ENCODE measurements at regions of chr19 and their contacts with region 1.

Region 1: DNA sequence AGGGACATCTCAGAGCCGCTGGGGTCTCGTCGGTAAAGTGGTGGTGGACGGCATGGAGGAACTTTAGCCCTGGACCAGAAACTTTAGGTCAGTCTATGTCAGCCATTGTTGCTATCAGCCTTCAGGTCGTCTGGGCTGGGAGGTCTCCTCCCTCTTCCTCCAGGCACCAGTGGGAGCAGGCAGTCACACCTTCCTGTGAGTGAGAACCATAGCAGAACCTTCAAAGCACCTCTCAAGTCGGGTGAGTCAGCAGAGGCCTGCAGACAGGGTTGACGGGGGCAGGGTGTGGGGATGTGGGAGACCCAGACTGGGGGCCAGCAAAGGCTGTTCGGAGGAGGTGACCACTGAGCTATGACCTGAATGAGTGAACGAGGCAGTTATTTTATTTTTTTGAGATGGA is 15.4 kb upstream of the SBNO2 start:
- DNase-seq: peak; percentile 87 to 88
- H3K4me3 ChIP-seq: no peak overlapping the region
- H3K27ac ChIP-seq: peak overlapping the region; percentile 14 to 75 (median 70)
- H3K4me1 ChIP-seq: peaks cover 3 to 18% of the 10 kb centered on the region in 2 donors
- H3K27me3 ChIP-seq: no peaks in the 10 kb centered on the region
- CTCF ChIP-seq: no peak
- POLR2A ChIP-seq: peak in 1 of 2 donors; percentile 39

Region 2: GRCh38 chr19:1113033-1113985 is 76.1 kb before region 1 on chr19:
- intact Hi-C with region 1: loop called (anchors 5 kb)
- DNase-seq: peak; percentile 97
- H3K4me3 ChIP-seq: no peak overlapping the region
- H3K27ac ChIP-seq: peak overlapping the region; percentile 69 to 76 (median 73)
- H3K4me1 ChIP-seq: peaks cover 4 to 14% of the 10 kb centered on the region in 2 donors
- H3K27me3 ChIP-seq: no peaks in the 10 kb centered on the region
- CTCF ChIP-seq: peak; percentile 71 to 98 (median 90)
- POLR2A ChIP-seq: peak in 1 of 2 donors; percentile 41

Region 3: DNA sequence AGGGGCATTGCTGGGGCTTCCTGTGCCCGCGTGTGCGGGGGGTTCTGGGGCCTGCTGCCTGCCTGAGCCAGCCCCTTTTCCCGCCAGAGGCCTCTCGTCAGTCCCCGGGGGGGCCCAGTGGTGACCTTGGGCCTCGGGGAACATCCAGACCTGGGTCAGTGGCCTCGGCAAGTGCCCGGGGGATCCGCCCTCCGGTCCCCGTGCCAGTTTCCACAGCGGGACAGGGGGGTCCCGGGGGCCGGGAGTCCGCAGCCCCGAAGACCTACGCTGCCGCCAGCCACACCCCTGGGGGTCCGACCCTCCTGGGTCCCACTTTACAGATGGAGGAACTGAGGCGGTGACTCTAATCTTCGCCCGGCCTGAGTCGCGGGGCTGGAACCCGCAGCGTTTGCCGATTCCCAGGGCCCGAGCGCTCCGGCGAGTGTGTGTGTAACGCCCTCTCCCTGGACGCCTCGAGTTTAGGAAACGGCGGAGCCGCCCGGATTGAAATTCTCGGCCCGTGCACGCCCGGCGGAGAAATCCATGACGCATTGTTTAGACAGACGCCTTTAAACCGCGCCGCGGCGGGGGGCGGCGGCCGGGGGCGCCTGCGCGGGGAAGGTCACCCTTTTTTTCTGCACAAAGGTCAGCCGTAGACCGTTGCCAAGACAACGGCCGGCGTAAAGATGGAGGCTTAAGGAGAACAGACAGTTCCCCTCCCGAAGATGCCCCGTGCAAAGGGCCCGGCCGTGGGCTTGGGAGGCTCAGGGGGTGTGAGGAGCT is 135.6 kb after region 1 on chr19:
- intact Hi-C with region 1: no loop called
- DNase-seq: peak; percentile 29 to 47
- H3K4me3 ChIP-seq: peak overlapping the region in 1 of 3 donors; percentile 24
- H3K27ac ChIP-seq: no peak overlapping the region
- H3K4me1 ChIP-seq: peaks cover 11% of the 10 kb centered on the region in 2 donors
- H3K27me3 ChIP-seq: no peaks in the 10 kb centered on the region
- CTCF ChIP-seq: no peak
- POLR2A ChIP-seq: no peak